Activated T-helper 1 cell treated with anti-CD3 and anti-CD28 coated beads, Interleukin-12 subunit alpha, Interleukin-12 subunit beta, Interleukin-2, Interleukin-4 antibody, amounts not matched to agents 30 ng/mL and 10 ng/mL and 1 ng/mL, durations not matched to agents 14 hours and 24 hours and 36 hours (primary cell): ENCODE measurements at regions of chr7 and their contacts with region 1.

Region 1: GRCh38 chr7:7761340-7761980 is 43.1 kb upstream of the RPA3 start:
- DNase-seq: no peak
- H3K4me3 Mint-ChIP-seq: peak overlapping the region; percentile 90
- H3K27ac Mint-ChIP-seq: peak overlapping the region; percentile 15
- H3K4me1 Mint-ChIP-seq: peaks cover 33% of the 10 kb centered on the region
- H3K27me3 Mint-ChIP-seq: no peaks in the 10 kb centered on the region

Region 2: DNA sequence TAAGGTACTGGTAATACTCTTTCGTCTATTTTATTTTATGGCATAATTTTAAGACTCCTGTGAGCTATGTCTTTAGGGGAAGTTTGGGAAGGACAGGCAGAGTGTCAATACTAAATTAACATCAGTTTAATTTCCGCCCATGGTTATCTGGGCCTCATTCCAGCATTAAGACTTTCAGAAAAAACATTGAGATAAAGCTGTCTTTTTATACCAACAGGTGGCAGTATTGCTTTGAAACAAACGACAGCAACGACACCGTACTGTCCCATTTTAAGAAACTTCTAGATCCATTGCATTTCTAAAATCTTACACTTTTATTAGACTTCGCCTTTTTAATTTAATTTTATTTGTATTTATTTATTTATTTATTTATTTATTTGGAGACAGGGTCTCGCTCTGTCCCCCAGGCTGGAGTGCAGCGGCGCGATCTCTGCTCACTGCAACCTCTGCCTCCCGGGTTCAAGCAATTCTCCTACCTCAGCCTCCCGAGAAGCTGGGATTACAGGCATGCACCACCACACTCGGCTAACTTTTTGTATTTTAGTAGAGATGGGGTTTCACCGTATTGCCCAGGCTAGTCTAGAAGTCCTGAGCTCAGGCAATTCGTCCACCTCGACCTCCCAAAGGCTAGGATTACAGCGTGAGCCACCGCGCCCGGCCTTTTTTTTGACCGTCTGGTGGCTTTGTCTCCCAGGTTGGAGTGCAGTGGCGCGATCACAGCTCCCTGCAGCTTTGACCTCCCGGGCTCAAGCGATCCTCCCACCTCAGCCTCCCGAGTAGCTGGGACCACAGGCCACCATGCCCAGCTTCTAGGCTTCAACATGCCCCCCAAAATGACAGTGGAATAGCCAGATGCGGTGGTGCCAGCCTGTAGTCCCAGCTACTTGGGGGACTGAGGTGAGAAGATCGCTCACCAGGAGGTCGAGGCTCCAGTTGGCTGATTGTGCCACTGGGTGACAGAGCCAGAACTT is 657.8 kb before region 1 on chr7:
- intact Hi-C with region 1: loop called (anchors 5 kb)
- DNase-seq: no peak
- H3K4me3 Mint-ChIP-seq: no peak overlapping the region
- H3K27ac Mint-ChIP-seq: no peak overlapping the region
- H3K4me1 Mint-ChIP-seq: peaks cover 16% of the 10 kb centered on the region
- H3K27me3 Mint-ChIP-seq: no peaks in the 10 kb centered on the region

Region 3: DNA sequence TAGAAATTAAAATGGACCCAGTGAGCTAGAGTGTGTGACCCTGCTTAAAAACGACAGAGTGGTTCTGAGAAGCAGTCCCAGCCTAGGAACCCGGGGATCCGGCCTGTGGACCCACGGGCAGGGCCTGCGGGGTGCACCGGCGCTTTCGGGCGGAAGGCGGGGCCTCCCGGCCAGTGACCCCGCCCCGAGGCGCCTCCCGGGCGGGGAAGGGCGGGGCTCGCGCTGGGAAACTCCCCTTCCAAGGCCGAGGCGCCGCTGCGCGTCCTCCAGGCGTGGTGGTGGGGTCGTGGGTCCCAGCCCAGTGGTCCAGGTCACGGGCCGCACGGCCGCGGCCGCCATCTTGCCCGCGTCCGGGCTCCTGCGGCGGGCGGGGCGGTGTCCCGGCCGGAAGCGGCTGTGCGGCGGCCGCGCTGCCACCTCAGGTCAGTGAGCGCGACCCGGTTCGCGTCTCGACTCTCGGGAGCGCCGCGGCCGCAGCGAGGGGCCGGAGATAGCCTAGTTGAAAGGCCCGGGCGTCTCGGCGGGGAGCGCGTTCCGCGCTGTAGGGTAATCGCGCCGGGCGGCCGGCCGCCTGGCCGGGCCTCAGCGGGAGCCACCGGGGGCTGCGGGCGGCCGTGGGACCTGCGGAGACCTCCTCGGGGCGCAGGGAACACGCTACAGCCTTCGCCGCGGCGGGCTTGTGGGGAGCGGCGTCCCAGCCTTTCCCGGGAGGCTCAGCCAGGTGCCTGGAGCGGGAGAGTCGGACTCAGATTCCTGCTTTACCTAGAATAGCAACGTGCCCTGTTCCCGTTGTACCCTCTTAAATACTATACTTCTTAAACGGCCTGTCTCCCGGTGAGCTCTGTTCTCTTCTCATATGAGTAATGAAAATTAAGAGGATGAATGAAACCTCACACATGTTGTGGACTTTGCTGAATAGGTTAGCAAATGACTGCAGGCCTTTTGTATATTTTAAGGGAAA is 194.5 kb before region 1 on chr7 and contains the start of gene MIOS:
- intact Hi-C with region 1: loop called (anchors 10 kb)
- DNase-seq: peak; percentile 80
- H3K4me3 Mint-ChIP-seq: peak within 1 kb of the TSS; percentile 88
- H3K27ac Mint-ChIP-seq: peak within 1 kb of the TSS; percentile 73
- H3K4me1 Mint-ChIP-seq: peaks cover 35% of the 10 kb centered on the region
- H3K27me3 Mint-ChIP-seq: no peaks in the 10 kb centered on the region
- total RNA-seq, gene MIOS: 29.6 and 31.6 TPM in 2 replicates

Region 4: DNA sequence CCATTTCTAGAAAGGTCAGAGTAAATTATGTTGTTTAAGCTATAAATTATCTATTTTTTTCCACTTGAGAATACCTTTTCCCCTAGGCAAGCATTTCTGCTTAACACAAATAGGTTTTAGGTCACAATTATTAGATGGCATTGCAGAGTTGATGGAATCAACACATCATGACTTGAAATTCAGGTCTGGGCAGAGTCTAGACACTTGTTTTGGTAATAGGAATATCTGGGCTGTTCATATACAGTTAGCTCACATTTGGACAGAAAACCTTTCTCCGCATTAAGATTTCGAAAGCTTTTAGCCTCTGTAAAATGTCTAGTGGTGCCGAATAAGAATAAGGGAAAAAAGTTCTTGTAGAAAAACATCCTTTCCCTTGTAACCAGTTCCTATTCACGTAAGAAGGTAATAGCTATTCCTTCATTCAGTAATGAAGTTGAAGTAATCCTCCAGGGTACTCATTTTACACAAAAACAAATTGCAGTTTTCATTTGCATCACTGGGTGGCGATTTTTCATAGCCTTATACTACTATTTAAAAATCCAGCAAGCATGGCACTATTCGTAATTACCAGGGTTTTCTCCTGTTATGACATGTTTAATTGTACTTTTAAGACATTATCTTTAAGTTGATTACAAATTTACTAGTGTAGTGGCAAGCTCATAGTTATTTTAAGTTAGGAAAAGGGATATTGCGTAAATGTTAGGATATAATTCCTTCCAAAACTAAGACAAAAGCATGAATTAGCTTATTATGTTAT is 80.1 kb before region 1 on chr7:
- intact Hi-C with region 1: loop called (anchors 1 kb)
- DNase-seq: peak; percentile 12
- H3K4me3 Mint-ChIP-seq: no peak overlapping the region
- H3K27ac Mint-ChIP-seq: no peak overlapping the region
- H3K4me1 Mint-ChIP-seq: peaks cover 12% of the 10 kb centered on the region
- H3K27me3 Mint-ChIP-seq: no peaks in the 10 kb centered on the region

Region 5: DNA sequence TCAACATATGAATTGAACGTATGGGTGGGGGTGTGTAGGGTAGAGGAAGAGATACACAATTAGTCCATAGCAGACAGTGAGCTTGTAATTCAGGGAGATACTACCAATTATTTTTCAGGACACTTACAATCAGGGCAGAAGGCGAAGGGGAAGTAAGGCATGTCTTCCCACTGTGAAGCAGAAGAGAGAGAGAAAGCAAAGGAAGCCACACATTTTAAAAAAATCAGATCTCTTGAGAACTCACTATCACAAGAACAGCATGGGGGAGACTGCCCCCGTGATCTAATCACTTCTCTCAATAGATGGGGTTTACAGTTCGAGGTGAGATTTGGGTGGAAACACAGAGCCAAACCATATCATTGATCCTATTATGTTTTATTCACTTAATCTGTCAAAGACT is 73.3 kb after region 1 on chr7:
- intact Hi-C with region 1: no loop called
- DNase-seq: no peak
- H3K4me3 Mint-ChIP-seq: no peak overlapping the region
- H3K27ac Mint-ChIP-seq: no peak overlapping the region
- H3K4me1 Mint-ChIP-seq: peaks cover 13% of the 10 kb centered on the region
- H3K27me3 Mint-ChIP-seq: peaks cover 2% of the 10 kb centered on the region

Region 6: GRCh38 chr7:7920481-7920880 is 159.0 kb after region 1 on chr7:
- intact Hi-C with region 1: loop called (anchors 2 kb)
- DNase-seq: peak; percentile 12
- H3K4me3 Mint-ChIP-seq: no peak overlapping the region
- H3K27ac Mint-ChIP-seq: no peak overlapping the region
- H3K4me1 Mint-ChIP-seq: peaks cover 44% of the 10 kb centered on the region
- H3K27me3 Mint-ChIP-seq: peaks cover 3% of the 10 kb centered on the region

Region 7: DNA sequence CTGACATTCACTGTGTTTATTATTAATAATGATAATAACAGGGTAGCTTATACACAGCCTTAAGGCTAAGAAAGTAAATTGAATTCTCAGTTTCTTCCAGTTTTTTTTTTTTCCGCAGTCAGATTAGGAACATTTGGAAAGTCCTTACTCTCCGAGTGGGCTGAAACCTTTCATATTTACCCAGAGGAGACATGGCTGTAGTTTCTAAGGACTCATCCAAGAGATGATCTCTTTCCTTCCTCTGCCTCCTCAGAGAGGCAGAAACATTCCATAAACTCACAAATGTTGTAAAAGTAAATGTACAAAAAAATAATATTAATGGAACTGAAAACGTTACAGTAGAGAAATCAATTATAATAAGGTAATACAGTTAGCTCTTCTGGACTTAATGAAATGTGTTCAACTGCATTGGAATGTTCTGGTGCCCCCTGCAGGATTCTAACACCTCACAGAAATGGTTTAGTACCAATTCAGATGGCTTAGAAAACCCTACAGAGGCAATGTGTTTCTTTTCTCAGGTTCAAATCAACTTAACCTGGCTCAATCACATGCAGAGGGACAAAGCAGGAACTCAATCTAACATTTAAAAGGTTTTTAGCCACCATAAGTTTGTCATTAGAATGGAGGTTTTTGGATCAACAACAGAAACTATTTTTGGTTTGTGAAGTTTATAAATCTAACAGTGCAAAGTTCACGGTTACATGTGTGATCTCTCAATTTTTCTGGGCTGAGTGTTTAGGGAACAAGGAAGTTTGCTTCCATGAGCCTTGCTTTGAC is 428.8 kb after region 1 on chr7:
- intact Hi-C with region 1: loop called (anchors 5 kb)
- DNase-seq: peak; percentile 41
- H3K4me3 Mint-ChIP-seq: no peak overlapping the region
- H3K27ac Mint-ChIP-seq: no peak overlapping the region
- H3K4me1 Mint-ChIP-seq: peaks cover 41% of the 10 kb centered on the region
- H3K27me3 Mint-ChIP-seq: peaks cover 5% of the 10 kb centered on the region